ENCODE measurements at regions of chr9 and their contacts with region 1.

Region 1: GRCh38 chr9:76451234-76451633 is 7.7 kb upstream of the GCNT1 start:
- DNase-seq: no peak
- ATAC-seq: no peak
- H3K4me3 ChIP-seq: no peak overlapping the region
- H3K4me3 Mint-ChIP-seq: no peak overlapping the region
- H3K27ac ChIP-seq: no peak overlapping the region
- H3K27ac Mint-ChIP-seq: no peak overlapping the region
- H3K4me1 ChIP-seq: peaks cover 7 to 9% of the 10 kb centered on the region in 2 donors
- H3K4me1 Mint-ChIP-seq: peaks cover 6% of the 10 kb centered on the region
- H3K27me3 ChIP-seq: no peaks in the 10 kb centered on the region
- H3K27me3 Mint-ChIP-seq: no peaks in the 10 kb centered on the region
- CTCF ChIP-seq: no peak

Region 2: GRCh38 chr9:76490249-76490990 is 39.2 kb after region 1 on chr9:
- CTCF ChIA-PET with region 1: no interaction called
- POLR2A ChIA-PET with region 1: no interaction called
- intact Hi-C with region 1: loop called (anchors 1 kb)
- DNase-seq: no peak
- ATAC-seq: no peak
- H3K4me3 ChIP-seq: no peak overlapping the region
- H3K4me3 Mint-ChIP-seq: no peak overlapping the region
- H3K27ac ChIP-seq: peak overlapping the region in 1 of 2 donors; percentile 41
- H3K27ac Mint-ChIP-seq: no peak overlapping the region
- H3K4me1 ChIP-seq: peaks cover 29 to 41% of the 10 kb centered on the region in 2 donors
- H3K4me1 Mint-ChIP-seq: peaks cover 59% of the 10 kb centered on the region
- H3K27me3 ChIP-seq: no peaks in the 10 kb centered on the region
- H3K27me3 Mint-ChIP-seq: no peaks in the 10 kb centered on the region
- CTCF ChIP-seq: no peak

Region 3: DNA sequence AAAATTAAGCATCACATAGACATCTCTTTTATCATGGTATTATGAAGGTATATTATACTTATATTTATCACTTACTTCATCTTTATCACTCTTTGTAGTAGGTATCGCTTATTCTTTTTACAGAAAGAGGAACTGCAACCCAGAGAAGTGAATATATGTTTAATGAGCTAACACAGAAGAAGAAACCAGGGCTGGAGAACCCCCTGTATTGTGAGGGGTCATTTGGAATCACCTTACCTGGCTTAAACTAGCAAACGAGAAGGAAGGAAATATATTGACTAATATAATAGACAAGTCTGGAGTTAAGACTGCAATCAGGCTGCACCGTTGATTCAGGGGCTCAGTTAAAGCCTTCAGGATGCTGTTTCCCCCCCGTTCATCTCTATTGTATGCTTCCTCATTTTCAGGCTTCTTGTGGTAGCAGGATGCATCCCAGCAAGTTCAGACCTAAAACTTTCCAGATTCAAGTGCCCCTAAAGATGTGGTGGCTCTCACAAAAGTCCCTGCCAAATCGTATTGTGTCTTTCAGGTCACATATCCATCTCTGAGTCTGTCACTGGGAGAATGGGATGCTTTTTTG is 154.2 kb after region 1 on chr9:
- CTCF ChIA-PET with region 1: no interaction called
- POLR2A ChIA-PET with region 1: interaction called, 11 read pairs
- intact Hi-C with region 1: no loop called
- DNase-seq: peak; percentile 56
- ATAC-seq: peak; percentile 57
- H3K4me3 ChIP-seq: no peak overlapping the region
- H3K4me3 Mint-ChIP-seq: no peak overlapping the region
- H3K27ac ChIP-seq: no peak overlapping the region
- H3K27ac Mint-ChIP-seq: no peak overlapping the region
- H3K4me1 ChIP-seq: peaks cover 12 to 15% of the 10 kb centered on the region in 2 donors
- H3K4me1 Mint-ChIP-seq: peaks cover 15% of the 10 kb centered on the region
- H3K27me3 ChIP-seq: peaks cover 0 to 3% (median 0%) of the 10 kb centered on the region in 4 experiments
- H3K27me3 Mint-ChIP-seq: peaks cover 5% of the 10 kb centered on the region
- CTCF ChIP-seq: no peak

Region 4: DNA sequence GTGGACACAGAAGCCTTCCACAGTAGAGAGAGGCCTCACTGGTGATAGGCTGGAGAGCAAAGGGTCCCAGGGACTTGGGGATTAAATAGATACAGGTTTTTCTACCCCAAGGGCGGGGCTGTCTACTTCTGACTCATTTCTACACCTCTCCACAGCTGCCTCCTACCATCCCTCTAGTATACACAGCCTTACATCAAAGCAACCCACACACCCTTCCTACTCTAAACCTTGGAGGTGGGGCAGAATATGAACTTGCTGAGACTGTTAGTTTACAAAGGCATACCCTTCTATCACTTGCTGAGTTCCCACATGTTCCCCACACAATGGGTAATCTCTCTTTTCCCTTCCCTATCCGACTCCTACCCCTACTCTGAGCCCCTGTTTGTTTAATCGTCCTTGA is 293.1 kb after region 1 on chr9:
- CTCF ChIA-PET with region 1: no interaction called
- POLR2A ChIA-PET with region 1: interaction called, 12 read pairs
- intact Hi-C with region 1: no loop called
- DNase-seq: no peak
- ATAC-seq: no peak
- H3K4me3 ChIP-seq: no peak overlapping the region
- H3K4me3 Mint-ChIP-seq: no peak overlapping the region
- H3K27ac ChIP-seq: no peak overlapping the region
- H3K27ac Mint-ChIP-seq: no peak overlapping the region
- H3K4me1 ChIP-seq: no peaks in the 10 kb centered on the region
- H3K4me1 Mint-ChIP-seq: no peaks in the 10 kb centered on the region
- H3K27me3 ChIP-seq: no peaks in the 10 kb centered on the region
- H3K27me3 Mint-ChIP-seq: peaks cover 28% of the 10 kb centered on the region
- CTCF ChIP-seq: no peak

Measured in B cell (primary cell).